Tibial artery (tissue), 4 donors: ENCODE measurements at regions of chr6 and their contacts with region 1.

Region 1: GRCh38 chr6:162306616-162307015 is 420.9 kb downstream of the PRKN start:
- DNase-seq: no peak
- H3K4me3 ChIP-seq: no peak overlapping the region
- H3K27ac ChIP-seq: no peak overlapping the region
- H3K4me1 ChIP-seq: no peaks in the 10 kb centered on the region
- H3K27me3 ChIP-seq: no peaks in the 10 kb centered on the region
- CTCF ChIP-seq: no peak

Region 2: GRCh38 chr6:162099685-162100084 is 206.9 kb before region 1 on chr6:
- intact Hi-C with region 1: no loop called
- DNase-seq: no peak
- H3K4me3 ChIP-seq: no peak overlapping the region
- H3K27ac ChIP-seq: no peak overlapping the region
- H3K4me1 ChIP-seq: peaks cover 0 to 7% (median 0%) of the 10 kb centered on the region in 4 donors
- H3K27me3 ChIP-seq: no peaks in the 10 kb centered on the region
- CTCF ChIP-seq: no peak

Region 3: DNA sequence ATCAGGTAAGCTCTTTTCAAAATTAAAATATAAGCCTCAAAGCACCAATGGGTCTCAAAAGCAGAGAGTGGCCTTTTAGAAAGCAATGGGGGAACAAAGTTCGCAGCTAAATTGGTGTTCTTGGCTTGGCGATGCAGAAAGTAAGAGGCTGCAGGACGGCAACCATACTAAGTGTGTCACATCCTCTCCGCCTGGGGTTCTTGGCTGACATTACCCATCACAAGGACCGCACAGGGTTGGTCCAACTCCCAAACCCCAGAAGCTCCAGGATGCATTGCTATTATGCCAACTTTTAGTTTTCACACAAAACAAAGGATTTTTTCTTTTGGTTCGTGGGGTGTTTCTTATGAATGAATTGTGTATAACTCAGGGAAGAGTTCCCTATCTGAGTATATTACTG is 296.1 kb after region 1 on chr6:
- intact Hi-C with region 1: loop called (anchors 10 kb)
- DNase-seq: no peak
- H3K4me3 ChIP-seq: no peak overlapping the region
- H3K27ac ChIP-seq: no peak overlapping the region
- H3K4me1 ChIP-seq: no peaks in the 10 kb centered on the region
- H3K27me3 ChIP-seq: no peaks in the 10 kb centered on the region
- CTCF ChIP-seq: no peak

Region 4: GRCh38 chr6:162798546-162799266 is 492.1 kb after region 1 on chr6:
- intact Hi-C with region 1: loop called (anchors 10 kb)
- DNase-seq: no peak
- H3K4me3 ChIP-seq: no peak overlapping the region
- H3K27ac ChIP-seq: no peak overlapping the region
- H3K4me1 ChIP-seq: no peaks in the 10 kb centered on the region
- H3K27me3 ChIP-seq: no peaks in the 10 kb centered on the region
- CTCF ChIP-seq: no peak